Heart left ventricle (tissue), 16 donors: ENCODE measurements at regions of chr1 and their contacts with region 1.

Region 1: GRCh38 chr1:186212544-186213226 is 162.4 kb downstream of the TPR start:
- DNase-seq: peak in 3 of 5 donors; percentile 29 to 45 (median 32)
- ATAC-seq: peak; percentile 82 to 94 (median 90)
- H3K4me3 ChIP-seq: no peak overlapping the region
- H3K27ac ChIP-seq: no peak overlapping the region
- H3K4me1 ChIP-seq: peaks cover 0 to 15% (median 0%) of the 10 kb centered on the region in 12 donors
- H3K27me3 ChIP-seq: no peaks in the 10 kb centered on the region
- CTCF ChIP-seq: peak; percentile 66 to 89 (median 82)
- POLR2A ChIP-seq: no peak

Region 2: DNA sequence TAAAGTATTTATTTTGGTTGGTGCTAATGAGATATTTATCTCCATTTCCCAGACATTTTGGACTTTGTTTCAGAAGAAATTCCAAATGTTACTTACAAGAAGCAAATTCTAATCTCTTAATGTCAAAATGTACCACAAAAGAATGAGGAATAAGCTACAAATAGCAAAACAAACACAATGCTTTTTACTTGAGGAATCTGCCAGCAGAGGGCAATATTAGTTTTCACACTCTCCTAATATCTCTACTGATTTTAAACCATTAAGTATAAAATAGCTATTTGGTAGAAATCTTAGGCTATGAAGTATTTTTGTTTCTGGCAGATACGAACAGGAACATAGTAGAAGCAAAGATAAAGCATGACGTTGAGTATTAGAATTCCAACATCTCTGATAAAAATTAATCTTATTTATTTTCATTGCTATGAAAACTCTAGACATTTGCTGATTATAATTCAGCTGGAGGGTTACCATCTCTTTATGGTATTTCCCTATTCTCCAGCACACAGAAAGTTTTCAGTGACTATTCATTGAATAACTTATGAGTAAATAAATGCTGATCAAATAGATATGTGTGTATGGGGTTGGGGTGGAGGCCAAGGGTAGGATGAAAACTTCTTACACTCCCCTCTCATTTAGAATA is 491.9 kb before region 1 on chr1:
- intact Hi-C with region 1: loop called (anchors 1 to 5 kb)
- DNase-seq: peak in 1 of 5 donors; percentile 15
- ATAC-seq: peak in 2 of 4 donors; percentile 62 to 69
- H3K4me3 ChIP-seq: no peak overlapping the region
- H3K27ac ChIP-seq: peak overlapping the region in 2 of 12 donors; percentile 3 to 48
- H3K4me1 ChIP-seq: peaks cover 0 to 11% (median 0%) of the 10 kb centered on the region in 12 donors
- H3K27me3 ChIP-seq: no peaks in the 10 kb centered on the region
- CTCF ChIP-seq: peak; percentile 33 to 77 (median 66)
- POLR2A ChIP-seq: no peak

Region 3: DNA sequence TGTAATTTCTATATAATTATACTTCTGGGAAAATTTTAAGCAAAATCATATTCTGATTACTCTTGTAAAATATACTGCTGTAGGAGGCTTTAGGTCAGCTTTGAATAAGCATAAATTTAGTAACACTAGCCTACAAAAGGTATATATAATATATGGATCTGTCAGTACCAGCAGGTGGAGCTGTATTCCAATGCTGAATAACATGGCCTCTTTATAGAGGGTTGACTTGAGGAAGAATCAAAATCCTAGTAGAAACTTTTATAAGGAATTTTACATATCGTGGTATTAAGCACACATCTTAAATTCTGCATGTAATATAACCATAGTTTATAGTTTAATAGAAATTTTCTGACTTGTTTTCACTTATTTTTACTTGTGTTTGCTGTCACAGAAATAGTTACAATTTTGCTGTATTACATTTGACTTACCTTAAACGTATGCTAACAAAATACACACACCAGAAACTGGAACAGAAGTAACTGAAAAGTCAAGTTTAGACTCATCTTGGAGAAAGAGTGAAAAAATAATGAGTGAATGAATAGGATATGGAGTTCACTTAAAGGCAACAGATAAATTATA is 399.2 kb before region 1 on chr1:
- intact Hi-C with region 1: loop called in 9 of 10 experiments (anchors 1 to 10 kb)
- DNase-seq: no peak
- ATAC-seq: no peak
- H3K4me3 ChIP-seq: no peak overlapping the region
- H3K27ac ChIP-seq: no peak overlapping the region
- H3K4me1 ChIP-seq: peaks cover 0 to 7% (median 0%) of the 10 kb centered on the region in 12 donors
- H3K27me3 ChIP-seq: no peaks in the 10 kb centered on the region
- CTCF ChIP-seq: peak; percentile 33 to 74 (median 52)
- POLR2A ChIP-seq: no peak

Region 4: GRCh38 chr1:186152620-186153361 is 59.9 kb before region 1 on chr1:
- intact Hi-C with region 1: loop called in 1 of 10 experiments (anchors 5 kb)
- DNase-seq: no peak
- ATAC-seq: no peak
- H3K4me3 ChIP-seq: no peak overlapping the region
- H3K27ac ChIP-seq: no peak overlapping the region
- H3K4me1 ChIP-seq: peaks cover 0 to 7% (median 0%) of the 10 kb centered on the region in 12 donors
- H3K27me3 ChIP-seq: no peaks in the 10 kb centered on the region
- CTCF ChIP-seq: no peak
- POLR2A ChIP-seq: no peak

Region 5: DNA sequence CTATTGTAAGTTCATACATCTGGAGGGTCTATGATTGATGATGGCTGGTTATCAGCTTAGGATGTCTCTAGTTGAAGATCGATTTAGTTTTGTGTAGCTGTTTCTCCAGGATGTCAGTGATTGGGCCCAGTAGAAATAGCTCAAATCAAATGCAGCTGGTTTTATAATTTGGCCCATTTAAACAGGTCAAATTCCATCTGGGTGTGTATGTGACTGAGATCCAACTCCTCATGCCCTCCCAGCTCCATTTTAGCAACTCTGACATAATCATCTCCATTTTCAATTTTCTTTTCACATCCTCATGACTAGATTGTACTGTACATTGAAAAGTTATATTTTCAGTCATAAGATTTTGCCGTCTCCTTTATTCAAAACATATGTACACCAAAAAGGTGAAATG is 63.1 kb after region 1 on chr1:
- intact Hi-C with region 1: no loop called
- DNase-seq: no peak
- ATAC-seq: no peak
- H3K4me3 ChIP-seq: no peak overlapping the region
- H3K27ac ChIP-seq: no peak overlapping the region
- H3K4me1 ChIP-seq: no peaks in the 10 kb centered on the region
- H3K27me3 ChIP-seq: no peaks in the 10 kb centered on the region
- CTCF ChIP-seq: no peak
- POLR2A ChIP-seq: no peak